A549 (cell line): ENCODE measurements at regions of chr20 and their contacts with region 1.

Region 1: DNA sequence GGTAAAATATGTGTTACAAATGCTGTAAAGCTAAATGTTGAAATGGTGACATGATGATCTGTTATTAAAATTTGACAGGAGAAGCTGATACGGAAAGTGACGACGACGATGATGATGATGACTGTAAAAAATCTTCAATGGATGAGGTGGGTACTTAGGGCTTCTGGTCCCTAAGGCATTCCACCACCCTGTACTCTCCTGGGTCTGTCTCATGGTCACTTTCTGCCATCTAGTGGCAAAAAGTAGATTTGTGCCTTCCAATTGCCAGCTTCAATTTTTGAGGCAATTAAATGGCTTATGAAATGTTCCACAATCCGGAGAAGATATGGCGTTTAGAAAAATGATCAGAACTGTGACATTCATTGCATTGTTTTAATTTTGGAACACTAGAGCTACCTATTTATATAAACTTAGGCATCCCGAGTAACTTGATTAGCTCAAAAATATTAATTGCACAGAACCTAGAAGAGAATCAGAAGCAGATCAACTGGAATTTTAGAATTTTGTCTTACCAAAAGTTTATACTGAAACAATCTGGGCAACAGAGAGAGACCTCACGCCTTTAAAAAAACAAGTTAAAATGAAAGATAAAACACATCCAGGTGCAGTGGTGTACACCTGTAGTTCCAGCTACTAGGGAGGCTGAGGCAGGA is 346.5 kb upstream of the PLCB4 start:
- DNase-seq: peak; percentile 37 to 80
- ATAC-seq: peak; percentile 91 to 97
- H3K4me3 ChIP-seq: no peak overlapping the region
- H3K27ac ChIP-seq: no peak overlapping the region
- H3K4me1 ChIP-seq: no peaks in the 10 kb centered on the region
- CTCF ChIP-seq: peak; percentile 97
- EP300 ChIP-seq: no peak
- POLR2A ChIP-seq: no peak
- RAD21 ChIP-seq: peak; percentile 95 to 97

Region 2: GRCh38 chr20:7935027-7935551 is 787.3 kb before region 1 on chr20:
- CTCF ChIA-PET with region 1: interaction called, 188 read pairs
- POLR2A ChIA-PET with region 1: no interaction called
- DNase-seq: no peak
- ATAC-seq: no peak
- H3K4me3 ChIP-seq: no peak overlapping the region
- H3K27ac ChIP-seq: no peak overlapping the region
- H3K4me1 ChIP-seq: no peaks in the 10 kb centered on the region
- CTCF ChIP-seq: no peak
- EP300 ChIP-seq: no peak
- POLR2A ChIP-seq: no peak
- RAD21 ChIP-seq: no peak

Region 3: GRCh38 chr20:8033151-8033841 is 689.1 kb before region 1 on chr20:
- CTCF ChIA-PET with region 1: interaction called, 13 read pairs
- POLR2A ChIA-PET with region 1: no interaction called
- DNase-seq: no peak
- ATAC-seq: no peak
- H3K4me3 ChIP-seq: no peak overlapping the region
- H3K27ac ChIP-seq: no peak overlapping the region
- H3K4me1 ChIP-seq: no peaks in the 10 kb centered on the region
- CTCF ChIP-seq: no peak
- EP300 ChIP-seq: no peak
- POLR2A ChIP-seq: no peak
- RAD21 ChIP-seq: no peak

Region 4: DNA sequence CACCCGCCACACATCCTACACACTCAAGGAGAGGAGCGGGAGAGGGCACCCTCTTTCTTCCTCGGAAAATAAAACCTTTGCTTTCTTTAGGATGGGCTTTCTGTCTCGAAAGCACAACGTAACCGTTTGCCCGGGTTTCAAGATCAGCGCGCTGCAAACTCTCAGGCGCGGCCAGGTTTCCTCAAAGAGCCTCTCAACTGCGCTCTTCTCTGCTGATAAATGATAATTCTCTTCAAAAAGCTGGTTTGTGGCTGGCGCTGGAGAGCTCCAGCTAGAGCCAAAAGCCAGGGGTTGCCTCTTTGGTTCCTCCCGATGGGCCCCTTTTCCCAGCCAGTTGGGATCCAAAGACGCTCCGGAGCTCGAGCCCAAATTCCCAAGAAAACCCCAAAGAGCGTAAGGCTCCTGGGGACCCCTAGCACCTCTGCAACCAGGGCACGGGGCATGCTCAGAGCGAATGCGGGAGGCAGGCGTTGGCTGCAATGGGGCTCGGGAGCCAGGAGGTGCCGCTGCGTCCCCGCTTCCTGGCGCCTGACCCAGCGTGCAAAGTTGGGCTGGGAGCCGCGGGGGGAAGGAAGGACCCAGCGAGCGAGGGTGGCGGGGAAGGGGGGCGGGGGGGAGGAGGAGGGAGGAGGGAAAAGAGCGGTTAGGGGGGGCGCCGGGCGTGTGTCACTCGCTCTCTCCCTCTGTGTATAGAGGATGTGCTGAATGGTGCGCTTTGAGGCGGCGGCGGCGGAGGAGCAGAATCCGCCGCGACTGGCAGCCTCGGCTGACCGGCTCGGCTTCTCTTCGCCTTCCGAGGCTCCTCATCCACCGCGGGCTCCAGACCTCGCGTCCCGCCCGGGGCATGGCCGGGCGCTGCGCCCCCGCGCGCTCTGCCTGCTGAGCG is 590.6 kb before region 1 on chr20 and contains the start of gene PLCB1:
- CTCF ChIA-PET with region 1: interaction called, 26 read pairs
- POLR2A ChIA-PET with region 1: no interaction called
- DNase-seq: peak; percentile 73 to 82
- ATAC-seq: peak; percentile 97 to 99
- H3K4me3 ChIP-seq: peak within 1 kb of the TSS; percentile 60
- H3K27ac ChIP-seq: peak within 1 kb of the TSS; percentile 40 to 73; a peak in 4 of 6 replicates
- H3K4me1 ChIP-seq: no peaks in the 10 kb centered on the region; the same call in 2 of the 3 replicates
- CTCF ChIP-seq: peak; percentile 78
- EP300 ChIP-seq: no peak
- POLR2A ChIP-seq: no peak
- RAD21 ChIP-seq: peak; percentile 84 to 98
- polyA plus RNA-seq, gene PLCB1: 5.9 and 6.3 TPM in 2 replicates

Region 5: DNA sequence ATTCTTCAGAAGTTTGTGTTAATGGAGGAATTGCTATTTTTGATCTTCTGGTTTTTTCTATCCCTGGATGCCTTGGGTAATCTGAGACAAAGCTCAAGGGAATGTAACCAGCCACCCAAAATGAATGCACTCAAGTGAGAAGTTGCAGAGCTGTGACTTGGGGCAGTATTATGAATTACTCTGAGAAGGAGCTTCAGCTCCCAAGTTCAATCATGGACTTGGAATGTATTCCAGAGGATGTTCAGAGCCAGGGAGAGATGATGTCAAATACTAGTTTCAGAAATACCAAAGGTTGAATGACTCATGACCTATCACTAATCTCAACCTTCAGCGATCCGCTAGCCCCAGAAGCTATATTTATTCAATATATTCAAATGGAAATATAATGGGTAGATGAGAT is 28.7 kb before region 1 on chr20:
- CTCF ChIA-PET with region 1: interaction called, 31 read pairs
- POLR2A ChIA-PET with region 1: no interaction called
- DNase-seq: no peak
- ATAC-seq: no peak
- H3K4me3 ChIP-seq: no peak overlapping the region
- H3K27ac ChIP-seq: no peak overlapping the region
- H3K4me1 ChIP-seq: no peaks in the 10 kb centered on the region
- CTCF ChIP-seq: no peak
- EP300 ChIP-seq: no peak
- POLR2A ChIP-seq: no peak
- RAD21 ChIP-seq: no peak

Region 6: DNA sequence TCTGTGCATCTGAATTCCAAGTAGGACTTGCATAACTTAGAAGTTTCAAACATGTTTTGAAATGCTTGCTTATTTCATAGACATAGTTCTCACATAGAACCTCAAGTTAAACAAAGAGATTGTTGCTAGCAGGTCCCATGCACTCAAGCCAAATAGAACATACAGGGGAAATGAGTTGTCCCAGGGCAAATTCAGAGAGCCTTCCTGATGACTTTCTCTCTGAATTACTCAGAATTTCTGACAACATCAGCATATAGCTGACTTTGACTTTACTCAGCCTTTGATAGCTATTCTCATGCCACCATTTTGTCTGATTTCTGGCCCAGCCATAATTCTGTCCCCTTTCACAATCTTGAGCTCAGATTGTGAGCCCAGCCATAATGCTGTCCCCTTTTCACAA is 13.3 kb after region 1 on chr20:
- CTCF ChIA-PET with region 1: interaction called, 34 read pairs
- POLR2A ChIA-PET with region 1: no interaction called
- DNase-seq: no peak
- ATAC-seq: no peak
- H3K4me3 ChIP-seq: no peak overlapping the region
- H3K27ac ChIP-seq: no peak overlapping the region
- H3K4me1 ChIP-seq: no peaks in the 10 kb centered on the region
- CTCF ChIP-seq: no peak
- EP300 ChIP-seq: no peak
- POLR2A ChIP-seq: no peak
- RAD21 ChIP-seq: no peak

Region 7: GRCh38 chr20:8764344-8764962 is 42.1 kb after region 1 on chr20:
- CTCF ChIA-PET with region 1: interaction called, 10 read pairs
- POLR2A ChIA-PET with region 1: no interaction called
- DNase-seq: no peak
- ATAC-seq: peak; percentile 23 to 53; a peak in 3 of 6 replicates
- H3K4me3 ChIP-seq: no peak overlapping the region
- H3K27ac ChIP-seq: 0 out of 6 replicates have a peak overlapping the region, but pooled peaks of 1 of the 2 experiments have one; percentile 29
- H3K4me1 ChIP-seq: 0 out of 3 replicates have a peak, but pooled peaks cover 3% of the 10 kb centered on the region
- CTCF ChIP-seq: no peak
- EP300 ChIP-seq: no peak
- POLR2A ChIP-seq: no peak
- RAD21 ChIP-seq: no peak